Caco-2 (cell line): ENCODE measurements at regions of chr1 and their contacts with region 1.

Region 1: DNA sequence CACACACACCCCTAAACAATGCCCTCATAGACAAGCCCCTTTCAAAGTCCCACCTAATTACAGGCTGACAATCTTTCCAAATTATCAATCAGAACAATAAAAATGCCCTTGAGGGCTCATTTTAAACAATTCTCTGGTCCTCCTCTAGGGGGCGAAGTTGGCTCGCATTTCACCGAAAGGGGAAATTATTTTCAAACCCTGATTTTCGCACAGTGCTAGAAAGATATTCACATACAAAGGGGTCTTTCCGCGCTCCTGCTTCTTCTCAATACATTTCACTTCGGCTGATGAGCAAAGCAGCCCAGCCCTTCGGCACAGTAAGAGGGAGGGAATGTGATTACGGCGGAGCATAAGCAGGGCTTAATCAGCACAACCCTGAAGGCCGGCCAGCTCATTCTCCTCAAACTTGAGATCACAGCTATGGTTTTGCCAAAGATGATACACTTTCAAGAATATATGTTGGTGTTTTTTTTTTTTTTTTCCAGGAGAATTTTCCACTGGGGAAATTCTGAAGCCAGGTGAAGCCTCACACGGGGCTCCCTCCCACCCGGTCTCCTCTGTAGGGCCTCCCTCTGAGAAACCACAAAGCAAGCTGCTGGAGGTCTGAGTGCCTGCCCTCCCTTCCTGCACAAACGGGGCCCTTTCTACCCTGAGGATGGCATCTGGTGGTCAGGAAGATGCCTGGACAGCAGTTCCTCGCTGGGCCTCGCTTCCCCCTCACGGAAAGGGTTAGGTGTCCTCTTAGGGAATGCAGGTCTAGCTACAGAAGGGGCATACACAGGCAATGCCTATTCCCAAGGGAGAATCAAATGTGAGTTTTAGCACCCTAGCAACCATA is 66.9 kb downstream of the GNG12 start:
- DNase-seq: peak in 1 of 2 experiments; percentile 37
- H3K4me3 ChIP-seq: no peak overlapping the region
- H3K4me3 Mint-ChIP-seq: no peak overlapping the region
- H3K27ac Mint-ChIP-seq: no peak overlapping the region
- H3K4me1 ChIP-seq: no peaks in the 10 kb centered on the region
- H3K4me1 Mint-ChIP-seq: peaks cover 20% of the 10 kb centered on the region
- H3K27me3 ChIP-seq: no peaks in the 10 kb centered on the region
- H3K27me3 Mint-ChIP-seq: no peaks in the 10 kb centered on the region
- CTCF ChIP-seq: peak; percentile 46 to 54

Region 2: GRCh38 chr1:67832737-67833601 is 66.6 kb after region 1 on chr1 and contains the start of gene GNG12:
- CTCF ChIA-PET with region 1: interaction called, 5 read pairs
- POLR2A ChIA-PET with region 1: no interaction called
- intact Hi-C with region 1: loop called (anchors 5 kb)
- DNase-seq: peak; percentile 70 to 79
- H3K4me3 ChIP-seq: peak within 1 kb of the TSS; percentile 41
- H3K4me3 Mint-ChIP-seq: peak within 1 kb of the TSS; percentile 92
- H3K27ac Mint-ChIP-seq: peak within 1 kb of the TSS; percentile 79
- H3K4me1 ChIP-seq: peaks cover 3% of the 10 kb centered on the region
- H3K4me1 Mint-ChIP-seq: no peaks in the 10 kb centered on the region
- H3K27me3 ChIP-seq: no peaks in the 10 kb centered on the region
- H3K27me3 Mint-ChIP-seq: no peaks in the 10 kb centered on the region
- CTCF ChIP-seq: no peak
- total RNA-seq, gene GNG12: 12.0 and 12.5 TPM in 2 replicates

Region 3: DNA sequence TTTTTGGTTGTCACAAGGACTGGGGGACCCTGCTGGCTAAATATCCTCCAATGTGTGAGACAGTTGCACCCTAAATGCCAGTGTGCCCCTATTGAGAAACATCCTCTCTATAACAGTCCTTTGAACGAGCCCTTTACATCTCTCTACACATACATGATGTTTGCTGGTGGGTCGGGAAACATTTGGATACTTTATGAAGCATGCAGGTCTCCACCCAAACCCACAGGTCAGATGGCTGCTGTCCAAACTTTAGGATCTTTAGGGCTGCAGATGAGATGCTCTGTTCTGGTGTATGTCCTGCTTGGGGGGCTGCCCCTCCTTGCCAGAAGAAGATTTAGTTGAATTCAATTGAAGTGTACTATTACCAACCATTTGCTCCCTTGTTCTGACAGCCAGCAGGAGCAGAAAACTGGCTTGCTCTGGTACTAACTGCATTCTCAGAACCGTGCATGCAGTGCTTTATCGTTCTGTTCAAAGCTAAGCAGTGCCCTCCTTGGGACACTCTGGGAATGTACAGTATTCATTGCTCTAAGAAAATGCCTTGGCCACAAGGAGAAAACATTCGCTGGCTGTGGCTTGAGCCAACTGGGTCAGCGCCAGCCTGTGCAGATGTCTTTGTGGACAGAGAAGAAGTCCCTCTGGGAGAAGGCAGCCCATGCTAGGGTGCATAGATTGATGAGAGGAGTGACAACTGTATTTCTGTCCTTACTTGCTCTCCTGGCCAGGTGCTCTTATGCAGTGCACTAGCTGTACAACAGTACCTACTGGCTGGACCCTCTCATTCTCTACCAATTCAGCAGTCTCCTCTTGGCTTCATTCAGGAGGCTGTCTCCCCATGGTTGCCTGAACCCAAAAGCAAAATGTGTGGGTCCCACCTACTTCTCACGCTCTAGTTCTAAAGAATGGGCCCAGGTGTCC is 345.4 kb after region 1 on chr1:
- CTCF ChIA-PET with region 1: no interaction called
- POLR2A ChIA-PET with region 1: no interaction called
- intact Hi-C with region 1: loop called (anchors 2 kb)
- DNase-seq: peak in 1 of 2 experiments; percentile 47
- H3K4me3 ChIP-seq: no peak overlapping the region
- H3K4me3 Mint-ChIP-seq: no peak overlapping the region
- H3K27ac Mint-ChIP-seq: no peak overlapping the region
- H3K4me1 ChIP-seq: no peaks in the 10 kb centered on the region
- H3K4me1 Mint-ChIP-seq: no peaks in the 10 kb centered on the region
- H3K27me3 ChIP-seq: no peaks in the 10 kb centered on the region
- H3K27me3 Mint-ChIP-seq: no peaks in the 10 kb centered on the region
- CTCF ChIP-seq: peak; percentile 51